ENCODE measurements at regions of chr14 and their contacts with region 1.

Region 1: DNA sequence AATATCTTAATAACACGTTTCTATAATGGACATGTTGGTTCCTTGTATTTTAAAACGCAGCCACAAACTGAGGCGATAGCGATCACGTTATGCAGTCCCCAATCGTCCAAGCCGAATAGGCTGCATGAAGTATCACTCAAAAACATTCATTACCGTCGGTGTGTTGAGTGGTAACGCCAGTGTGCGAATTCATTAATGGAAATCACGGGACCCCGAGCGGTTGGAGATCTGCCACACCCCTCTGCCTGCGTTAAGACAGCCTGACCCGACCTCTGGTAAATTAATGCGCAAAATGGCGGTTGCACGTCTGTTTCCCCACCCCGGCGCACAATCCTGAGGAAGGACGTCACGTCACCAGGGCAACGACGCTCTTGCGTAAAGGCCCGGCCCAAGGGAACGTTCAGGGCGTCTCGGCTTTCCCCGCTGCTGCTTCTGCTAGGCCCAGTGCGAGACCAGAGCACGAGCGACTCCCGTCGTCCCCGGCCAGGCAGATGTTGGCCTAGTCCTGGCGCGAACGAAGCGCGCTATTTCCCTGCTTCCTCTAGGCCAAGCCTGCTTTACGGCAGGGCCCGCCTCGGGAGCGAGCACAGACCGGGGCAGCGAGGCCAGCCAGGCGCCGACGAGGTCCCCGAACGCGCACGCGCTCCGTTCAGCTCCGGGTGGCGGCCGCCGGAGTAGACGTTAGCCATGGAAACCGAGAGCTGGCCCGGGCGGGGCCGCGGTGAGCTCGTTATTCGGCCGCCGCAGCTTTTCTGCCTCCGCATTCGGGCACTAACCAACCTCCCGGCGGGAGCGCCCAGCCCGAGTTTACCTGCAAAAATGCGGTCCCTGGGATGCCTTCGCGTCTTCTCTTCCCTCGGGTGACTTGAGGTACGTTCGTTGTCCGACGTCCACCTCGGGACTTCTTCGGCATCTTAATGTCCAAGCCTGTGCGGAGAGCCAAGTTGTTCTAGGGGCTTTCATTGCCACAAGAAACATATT is at the start of gene PCNX4:
- DNase-seq: peak; percentile 97 to 98
- ATAC-seq: peak; percentile 89 to 91
- H3K4me3 ChIP-seq: peak within 1 kb of the TSS; percentile 71 to 86 (median 73)
- H3K27ac ChIP-seq: peak within 1 kb of the TSS; percentile 88 to 99 (median 96)
- H3K4me1 ChIP-seq: peaks cover 36 to 41% of the 10 kb centered on the region in 2 donors
- H3K27me3 ChIP-seq: no peaks in the 10 kb centered on the region
- CTCF ChIP-seq: peak in 1 of 5 experiments; percentile 12
- POLR2A ChIP-seq: peak; percentile 92 to 96
- total RNA-seq, gene PCNX4: 11.3 to 42.8 (median 34.8) TPM

Region 2: GRCh38 chr14:58919217-58919616 is 1172.6 kb before region 1 on chr14:
- in situ Hi-C with region 1: no loop called
- intact Hi-C with region 1: no loop called
- DNase-seq: no peak
- ATAC-seq: no peak
- H3K4me3 ChIP-seq: no peak overlapping the region
- H3K27ac ChIP-seq: no peak overlapping the region
- H3K4me1 ChIP-seq: no peaks in the 10 kb centered on the region
- H3K27me3 ChIP-seq: no peaks in the 10 kb centered on the region
- CTCF ChIP-seq: no peak
- POLR2A ChIP-seq: no peak

Region 3: DNA sequence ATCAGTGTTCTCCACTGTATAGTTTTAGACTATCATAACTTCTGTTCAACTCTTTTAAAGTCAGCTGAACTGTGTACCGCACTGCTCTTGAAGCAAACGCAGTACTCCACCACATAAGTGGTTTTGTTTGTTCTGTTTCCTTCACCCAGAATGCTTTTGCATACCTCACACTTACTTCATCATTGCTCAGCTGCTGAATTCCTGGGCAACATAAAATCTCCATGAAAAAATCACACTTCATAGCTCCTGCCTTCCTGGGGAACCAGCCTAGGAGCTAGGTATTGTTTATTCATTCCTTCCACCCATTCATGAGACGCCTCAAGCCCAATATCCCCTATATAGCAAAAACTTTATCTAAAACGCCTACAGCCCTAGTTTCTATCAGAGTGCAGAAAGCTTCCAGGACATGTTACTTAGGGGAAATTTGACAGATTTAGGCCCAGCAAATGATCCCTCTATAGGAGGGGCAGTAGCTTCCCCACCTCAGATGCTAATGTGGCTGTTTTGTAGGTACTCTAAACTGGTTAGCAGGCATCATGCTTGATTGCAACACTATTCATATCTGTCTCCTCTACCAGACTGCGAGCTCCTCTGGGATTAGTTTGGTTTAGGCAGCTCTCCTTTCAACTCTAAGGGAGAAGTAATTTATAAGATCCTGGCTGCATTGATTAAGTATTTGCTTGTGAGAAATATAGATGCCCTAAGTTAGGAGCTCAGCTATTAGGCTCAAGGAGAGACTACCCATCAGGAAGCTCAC is 127.4 kb before region 1 on chr14:
- in situ Hi-C with region 1: no loop called
- intact Hi-C with region 1: loop called (anchors 1 kb)
- DNase-seq: no peak
- ATAC-seq: peak; percentile 13 to 43
- H3K4me3 ChIP-seq: peak overlapping the region in 1 of 4 donors; percentile 81
- H3K27ac ChIP-seq: peak overlapping the region in 1 of 4 donors; percentile 73
- H3K4me1 ChIP-seq: peaks cover 0 to 3% of the 10 kb centered on the region in 2 donors
- H3K27me3 ChIP-seq: no peaks in the 10 kb centered on the region
- CTCF ChIP-seq: no peak
- POLR2A ChIP-seq: no peak

Region 4: GRCh38 chr14:60064491-60065072 is 27.3 kb before region 1 on chr14:
- in situ Hi-C with region 1: no loop called
- intact Hi-C with region 1: loop called (anchors 2 kb)
- DNase-seq: no peak
- ATAC-seq: peak; percentile 56 to 75
- H3K4me3 ChIP-seq: no peak overlapping the region
- H3K27ac ChIP-seq: no peak overlapping the region
- H3K4me1 ChIP-seq: peaks cover 0 to 4% of the 10 kb centered on the region in 2 donors
- H3K27me3 ChIP-seq: no peaks in the 10 kb centered on the region
- CTCF ChIP-seq: peak; percentile 45 to 90 (median 66)
- POLR2A ChIP-seq: no peak

Region 5: DNA sequence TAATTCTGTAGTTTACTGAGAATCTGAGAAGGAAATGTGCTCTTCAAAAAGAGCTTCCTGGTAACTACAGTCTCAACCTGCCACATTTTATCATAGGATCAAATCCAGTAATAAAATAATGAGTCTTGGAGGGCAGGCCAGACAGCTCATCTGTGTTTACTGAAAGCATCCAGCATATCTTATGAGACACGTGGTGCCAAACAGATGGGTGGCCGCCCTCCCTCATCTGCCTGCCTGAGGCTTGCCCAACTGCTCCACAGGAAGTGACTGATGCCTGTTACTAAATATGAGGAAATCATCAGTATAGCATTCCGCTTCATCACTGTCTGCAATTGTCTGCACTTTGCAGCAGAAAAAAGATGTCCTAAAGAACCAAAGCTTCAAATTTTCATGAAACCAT is 59.9 kb after region 1 on chr14:
- in situ Hi-C with region 1: loop called in 1 of 4 experiments (anchors 5 kb)
- intact Hi-C with region 1: no loop called
- DNase-seq: peak; percentile 88 to 96
- ATAC-seq: peak; percentile 98 to 99
- H3K4me3 ChIP-seq: no peak overlapping the region
- H3K27ac ChIP-seq: peak overlapping the region; percentile 97 to 100 (median 99)
- H3K4me1 ChIP-seq: peaks cover 48 to 50% of the 10 kb centered on the region in 2 donors
- H3K27me3 ChIP-seq: no peaks in the 10 kb centered on the region
- CTCF ChIP-seq: no peak
- POLR2A ChIP-seq: peak; percentile 38 to 39

Region 6: DNA sequence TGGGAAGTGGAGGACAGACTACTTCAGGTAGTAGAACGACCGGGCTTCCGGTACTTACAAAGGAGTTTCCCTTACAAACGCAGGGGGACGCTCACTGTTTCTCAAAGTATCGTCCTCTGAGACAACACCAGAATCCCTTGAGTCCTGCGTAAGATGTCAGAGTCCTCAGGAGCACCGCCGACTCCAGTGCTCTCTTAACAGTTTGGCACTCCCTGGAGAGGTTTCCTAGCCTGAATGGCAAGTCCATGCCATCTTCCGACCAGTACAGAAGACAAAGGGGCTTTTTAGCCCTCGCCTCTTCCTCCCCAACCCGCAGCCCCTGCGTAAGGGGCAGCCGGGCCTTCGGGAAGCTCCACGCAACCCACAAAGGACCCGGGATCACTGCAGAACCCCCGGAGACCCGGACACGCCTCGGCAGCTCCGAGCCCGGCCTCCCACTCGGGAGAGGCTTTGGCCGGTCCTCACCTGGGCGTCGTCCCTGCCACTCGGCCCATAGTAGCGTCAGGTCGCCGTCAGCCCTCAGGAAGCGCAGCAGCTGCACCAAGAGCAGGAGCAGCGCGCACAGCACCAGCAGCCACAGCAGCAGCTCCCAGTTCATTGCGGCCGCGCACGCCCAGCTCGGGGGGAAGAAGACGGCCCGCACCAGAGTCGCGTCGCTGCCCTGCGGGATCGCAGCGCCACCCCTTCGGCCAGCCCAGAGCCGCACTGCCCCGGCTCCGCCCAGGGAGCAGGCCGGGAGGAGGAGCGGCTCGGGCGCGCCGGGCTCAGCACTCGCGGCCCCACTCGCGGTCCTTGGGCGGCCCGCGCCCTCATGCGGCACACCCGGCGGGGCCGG is 73.1 kb after region 1 on chr14 and contains the start of gene DHRS7:
- in situ Hi-C with region 1: loop called in 2 of 4 experiments (anchors 10 kb)
- intact Hi-C with region 1: loop called (anchors 1 kb)
- DNase-seq: peak; percentile 72 to 83
- ATAC-seq: peak; percentile 42
- H3K4me3 ChIP-seq: peak within 1 kb of the TSS; percentile 81 to 95 (median 92)
- H3K27ac ChIP-seq: peak within 1 kb of the TSS; percentile 97 to 100 (median 99)
- H3K4me1 ChIP-seq: peaks cover 33 to 52% of the 10 kb centered on the region in 2 donors
- H3K27me3 ChIP-seq: no peaks in the 10 kb centered on the region
- CTCF ChIP-seq: peak in 4 of 5 experiments; percentile 32 to 68 (median 40)
- POLR2A ChIP-seq: peak; percentile 71 to 88
- total RNA-seq, gene DHRS7: 937 to 2,179 (median 1,242) TPM

Region 7: DNA sequence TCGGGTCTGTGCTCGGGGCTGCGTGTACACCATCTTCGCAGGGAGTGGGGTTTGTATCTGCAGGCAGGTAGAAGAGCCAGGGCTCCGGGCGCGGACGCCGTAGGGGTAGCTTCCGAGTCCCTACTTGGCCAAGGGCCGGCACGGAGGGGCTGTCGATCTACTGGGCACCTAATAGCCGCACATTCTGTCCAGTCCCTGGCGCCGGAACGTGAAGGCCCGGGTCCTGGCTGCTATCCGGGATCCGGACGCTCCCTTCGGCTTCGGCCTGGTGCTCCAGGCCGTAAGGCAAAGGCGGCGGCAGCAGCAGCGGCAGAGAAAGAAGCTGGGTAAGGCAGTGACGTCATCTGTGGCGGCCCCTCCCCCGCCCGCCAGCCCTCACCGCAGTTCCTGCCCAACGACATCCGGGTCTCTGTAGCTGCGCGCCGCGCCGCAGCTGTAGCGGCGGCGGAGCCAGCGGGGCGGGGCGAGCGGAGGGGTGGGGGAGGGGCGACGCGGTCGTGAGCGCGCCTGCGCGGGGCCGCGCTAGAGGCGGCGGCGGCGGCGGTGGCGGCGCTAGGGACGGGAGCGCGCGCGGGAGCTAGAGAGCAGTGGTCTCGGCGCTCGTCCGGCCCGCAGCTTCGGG is 157.0 kb after region 1 on chr14 and contains the start of gene PPM1A:
- in situ Hi-C with region 1: loop called in 1 of 4 experiments (anchors 10 kb)
- intact Hi-C with region 1: loop called (anchors 1 kb)
- DNase-seq: peak; percentile 90 to 96
- ATAC-seq: peak; percentile 77 to 80
- H3K4me3 ChIP-seq: peak within 1 kb of the TSS; percentile 77 to 90 (median 88)
- H3K27ac ChIP-seq: peak within 1 kb of the TSS; percentile 97 to 100 (median 100)
- H3K4me1 ChIP-seq: peaks cover 35 to 38% of the 10 kb centered on the region in 2 donors
- H3K27me3 ChIP-seq: no peaks in the 10 kb centered on the region
- CTCF ChIP-seq: peak in 1 of 5 experiments; percentile 21
- POLR2A ChIP-seq: peak; percentile 83 to 95
- total RNA-seq, gene PPM1A: 81.2 to 107 (median 86.1) TPM

Region 8: GRCh38 chr14:60276342-60276741 is 184.5 kb after region 1 on chr14:
- in situ Hi-C with region 1: no loop called
- intact Hi-C with region 1: no loop called
- DNase-seq: no peak
- ATAC-seq: no peak
- H3K4me3 ChIP-seq: no peak overlapping the region
- H3K27ac ChIP-seq: no peak overlapping the region
- H3K4me1 ChIP-seq: peaks cover 76 to 86% of the 10 kb centered on the region in 2 donors
- H3K27me3 ChIP-seq: no peaks in the 10 kb centered on the region
- CTCF ChIP-seq: no peak
- POLR2A ChIP-seq: no peak

Region 9: GRCh38 chr14:60294411-60295069 is 202.7 kb after region 1 on chr14:
- in situ Hi-C with region 1: no loop called
- intact Hi-C with region 1: no loop called
- DNase-seq: no peak
- ATAC-seq: no peak
- H3K4me3 ChIP-seq: no peak overlapping the region
- H3K27ac ChIP-seq: no peak overlapping the region
- H3K4me1 ChIP-seq: no peaks in the 10 kb centered on the region
- H3K27me3 ChIP-seq: no peaks in the 10 kb centered on the region
- CTCF ChIP-seq: no peak
- POLR2A ChIP-seq: no peak

Region 10: DNA sequence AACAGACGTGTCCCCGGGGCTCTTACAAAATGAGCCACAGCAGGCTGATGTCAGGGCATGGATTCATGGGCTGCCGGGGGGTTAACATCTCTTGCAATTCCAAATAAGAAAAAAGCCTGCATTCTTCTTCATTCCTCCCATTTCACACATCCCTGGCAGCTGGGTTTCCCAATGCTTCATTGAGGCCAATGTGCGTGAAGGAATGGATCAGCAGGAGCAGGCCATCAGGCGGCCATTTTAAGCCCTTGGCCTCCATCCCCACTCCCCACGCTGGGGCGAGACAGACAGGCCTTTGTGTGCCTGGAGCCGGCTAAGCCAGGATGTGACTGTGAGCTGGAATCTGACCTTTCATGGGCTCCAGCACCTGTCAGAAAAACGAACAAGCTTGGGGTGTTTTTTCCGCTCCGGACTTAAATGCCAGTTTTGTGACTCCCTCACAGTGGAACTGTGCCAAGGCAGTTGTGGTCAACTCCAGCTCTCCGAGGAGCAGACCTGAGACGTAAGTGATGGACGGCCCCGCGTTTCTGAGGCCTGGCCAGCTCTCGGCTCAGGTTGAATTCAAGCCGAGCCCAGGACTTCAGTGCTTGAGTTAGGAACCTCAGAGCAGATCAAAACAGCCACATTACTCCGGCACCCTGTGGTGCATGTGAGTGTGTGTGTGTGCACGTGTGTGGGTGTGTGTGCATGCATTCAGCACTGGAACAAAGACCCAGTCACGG is 1056.2 kb after region 1 on chr14:
- in situ Hi-C with region 1: no loop called
- intact Hi-C with region 1: loop called (anchors 10 kb)
- DNase-seq: peak; percentile 77 to 89
- ATAC-seq: peak; percentile 44 to 65
- H3K4me3 ChIP-seq: peak overlapping the region in 3 of 4 donors; percentile 3 to 27 (median 16)
- H3K27ac ChIP-seq: peak overlapping the region; percentile 84 to 95 (median 88)
- H3K4me1 ChIP-seq: peaks cover 35 to 43% of the 10 kb centered on the region in 2 donors
- H3K27me3 ChIP-seq: no peaks in the 10 kb centered on the region
- CTCF ChIP-seq: no peak
- POLR2A ChIP-seq: no peak

Measured in gastrocnemius medialis (tissue), 4 donors.